Caco-2 (cell line): ENCODE measurements at regions of chr11 and their contacts with region 1.

Region 1: DNA sequence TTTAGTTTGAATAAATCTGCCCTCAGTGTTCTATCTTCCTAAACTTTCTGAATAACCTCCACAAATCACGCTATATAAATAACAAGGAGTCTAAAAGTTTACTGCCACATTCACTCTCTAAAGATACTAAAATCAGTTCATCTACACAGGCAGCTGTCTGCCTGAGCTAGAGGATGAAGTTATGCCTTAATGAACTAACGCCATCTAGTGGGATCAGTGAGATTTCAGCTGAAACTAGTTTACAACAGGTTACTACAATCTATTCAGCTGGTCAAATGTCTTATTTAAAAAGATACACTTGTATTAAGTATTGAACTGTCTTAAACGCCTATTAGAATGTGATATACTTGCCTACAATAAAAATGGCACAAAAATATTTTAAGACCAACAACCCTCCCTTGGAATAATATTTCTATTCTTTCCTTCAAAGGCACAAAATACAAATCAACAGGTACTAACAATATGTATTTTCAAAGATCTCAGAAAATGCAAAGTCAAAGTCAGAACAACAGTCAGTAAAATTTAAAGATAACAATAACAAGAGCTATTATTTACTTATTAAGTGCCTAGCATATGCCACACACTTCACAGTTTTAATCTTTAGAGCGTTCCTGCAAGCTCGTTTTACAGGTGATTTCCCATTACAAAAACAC is 84.1 kb downstream of the LARGE2 start:
- DNase-seq: peak in 1 of 2 experiments; percentile 73
- H3K4me3 ChIP-seq: no peak overlapping the region
- H3K4me3 Mint-ChIP-seq: no peak overlapping the region
- H3K27ac Mint-ChIP-seq: no peak overlapping the region
- H3K4me1 ChIP-seq: peaks cover 10% of the 10 kb centered on the region
- H3K4me1 Mint-ChIP-seq: peaks cover 12% of the 10 kb centered on the region
- H3K27me3 ChIP-seq: no peaks in the 10 kb centered on the region
- H3K27me3 Mint-ChIP-seq: no peaks in the 10 kb centered on the region
- CTCF ChIP-seq: peak; percentile 73 to 81

Region 2: DNA sequence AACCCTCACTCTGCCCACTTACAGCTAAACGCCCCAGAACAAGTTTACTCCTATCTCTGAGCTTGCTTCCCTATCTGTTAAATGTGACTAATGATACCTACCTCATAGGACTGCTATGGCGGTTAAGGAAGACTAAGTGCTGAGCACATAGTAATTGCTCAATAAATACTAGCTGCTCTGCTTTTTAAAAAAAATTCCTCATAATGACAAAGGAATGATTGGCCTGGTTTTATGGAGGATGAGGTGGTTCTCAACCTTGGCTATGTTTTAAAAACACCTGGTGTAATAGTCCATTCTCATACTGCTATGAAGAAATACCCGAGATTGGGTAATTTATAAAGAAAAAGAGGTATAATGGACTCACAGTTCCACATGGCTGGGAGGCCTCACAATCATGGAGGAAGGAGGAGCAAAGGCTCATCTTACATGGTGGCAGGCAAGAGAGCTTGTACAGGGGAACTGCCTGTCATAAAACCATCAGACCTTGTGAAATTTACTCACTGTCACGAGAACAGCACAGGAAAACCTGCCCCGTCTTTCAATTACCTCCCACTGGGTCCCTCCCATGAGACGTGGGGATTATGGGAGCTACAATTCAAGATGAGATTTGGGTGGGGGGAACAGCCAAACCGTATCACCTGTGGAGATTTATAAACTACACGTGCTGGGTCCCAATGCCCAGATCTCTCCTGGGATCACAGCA is 593.2 kb before region 1 on chr11:
- CTCF ChIA-PET with region 1: no interaction called
- POLR2A ChIA-PET with region 1: no interaction called
- intact Hi-C with region 1: no loop called
- DNase-seq: no peak
- H3K4me3 ChIP-seq: no peak overlapping the region
- H3K4me3 Mint-ChIP-seq: no peak overlapping the region
- H3K27ac Mint-ChIP-seq: no peak overlapping the region
- H3K4me1 ChIP-seq: no peaks in the 10 kb centered on the region
- H3K4me1 Mint-ChIP-seq: no peaks in the 10 kb centered on the region
- H3K27me3 ChIP-seq: peaks cover 3% of the 10 kb centered on the region
- H3K27me3 Mint-ChIP-seq: peaks cover 3% of the 10 kb centered on the region
- CTCF ChIP-seq: no peak

Region 3: GRCh38 chr11:45872513-45873356 is 133.8 kb before region 1 on chr11:
- CTCF ChIA-PET with region 1: interaction called, 5 read pairs
- POLR2A ChIA-PET with region 1: no interaction called
- intact Hi-C with region 1: loop called (anchors 1 kb)
- DNase-seq: peak; percentile 57 to 68
- H3K4me3 ChIP-seq: no peak overlapping the region
- H3K4me3 Mint-ChIP-seq: no peak overlapping the region
- H3K27ac Mint-ChIP-seq: no peak overlapping the region
- H3K4me1 ChIP-seq: no peaks in the 10 kb centered on the region
- H3K4me1 Mint-ChIP-seq: no peaks in the 10 kb centered on the region
- H3K27me3 ChIP-seq: no peaks in the 10 kb centered on the region
- H3K27me3 Mint-ChIP-seq: no peaks in the 10 kb centered on the region
- CTCF ChIP-seq: peak; percentile 60 to 74

Region 4: GRCh38 chr11:45917623-45918330 is 88.8 kb before region 1 on chr11 and contains the start of gene PEX16:
- CTCF ChIA-PET with region 1: interaction called, 22 read pairs
- POLR2A ChIA-PET with region 1: interaction called, 4 read pairs
- intact Hi-C with region 1: no loop called
- DNase-seq: peak; percentile 98 to 99
- H3K4me3 ChIP-seq: peak within 1 kb of the TSS; percentile 92
- H3K4me3 Mint-ChIP-seq: peak within 1 kb of the TSS; percentile 83
- H3K27ac Mint-ChIP-seq: peak within 1 kb of the TSS; percentile 99
- H3K4me1 ChIP-seq: peaks cover 17% of the 10 kb centered on the region
- H3K4me1 Mint-ChIP-seq: peaks cover 6% of the 10 kb centered on the region
- H3K27me3 ChIP-seq: no peaks in the 10 kb centered on the region
- H3K27me3 Mint-ChIP-seq: no peaks in the 10 kb centered on the region
- CTCF ChIP-seq: no peak
- total RNA-seq, gene PEX16: 41.4 and 45.8 TPM in 2 replicates

Region 5: GRCh38 chr11:45964911-45965389 is 41.6 kb before region 1 on chr11:
- CTCF ChIA-PET with region 1: interaction called, 107 read pairs
- POLR2A ChIA-PET with region 1: no interaction called
- intact Hi-C with region 1: loop called (anchors 1 kb)
- DNase-seq: peak; percentile 71 to 80
- H3K4me3 ChIP-seq: no peak overlapping the region
- H3K4me3 Mint-ChIP-seq: no peak overlapping the region
- H3K27ac Mint-ChIP-seq: no peak overlapping the region
- H3K4me1 ChIP-seq: peaks cover 21% of the 10 kb centered on the region
- H3K4me1 Mint-ChIP-seq: peaks cover 14% of the 10 kb centered on the region
- H3K27me3 ChIP-seq: no peaks in the 10 kb centered on the region
- H3K27me3 Mint-ChIP-seq: no peaks in the 10 kb centered on the region
- CTCF ChIP-seq: peak; percentile 92 to 95

Region 6: DNA sequence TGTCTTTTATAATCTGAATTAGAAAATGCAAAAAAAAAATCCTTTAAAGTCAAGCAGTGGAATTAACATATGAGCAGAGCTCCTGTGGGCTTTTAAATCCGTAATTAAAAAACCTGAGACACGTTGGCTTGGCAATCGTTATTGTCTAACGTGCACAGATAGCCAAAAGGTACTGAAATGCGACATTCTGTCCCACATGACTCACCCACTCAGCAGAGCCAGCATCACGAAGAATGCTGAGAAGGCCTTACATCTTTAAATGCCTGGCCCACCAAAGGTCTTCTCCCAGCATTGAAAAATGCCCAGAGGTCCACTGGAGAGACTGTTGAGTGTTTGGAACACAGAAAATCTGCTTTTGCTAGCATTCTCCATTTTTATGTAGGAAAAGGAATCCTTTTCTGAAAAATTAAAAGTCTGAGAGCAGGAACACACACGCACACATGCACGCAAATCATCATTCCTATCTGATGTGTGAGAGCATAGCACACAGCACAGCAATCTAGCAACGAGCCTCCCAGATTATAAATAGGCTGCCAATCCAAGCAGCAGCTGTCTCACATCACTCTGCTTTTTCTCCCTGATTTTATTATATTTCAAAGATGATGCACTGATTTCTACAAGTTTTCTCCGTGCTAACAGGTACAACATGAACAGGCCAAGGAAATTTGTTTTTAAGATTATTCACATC is 20.2 kb after region 1 on chr11:
- CTCF ChIA-PET with region 1: no interaction called
- POLR2A ChIA-PET with region 1: no interaction called
- intact Hi-C with region 1: no loop called
- DNase-seq: no peak
- H3K4me3 ChIP-seq: no peak overlapping the region
- H3K4me3 Mint-ChIP-seq: no peak overlapping the region
- H3K27ac Mint-ChIP-seq: no peak overlapping the region
- H3K4me1 ChIP-seq: no peaks in the 10 kb centered on the region
- H3K4me1 Mint-ChIP-seq: no peaks in the 10 kb centered on the region
- H3K27me3 ChIP-seq: no peaks in the 10 kb centered on the region
- H3K27me3 Mint-ChIP-seq: no peaks in the 10 kb centered on the region
- CTCF ChIP-seq: no peak